ENCODE measurements at regions of chr11 and their contacts with region 1.

Region 1: DNA sequence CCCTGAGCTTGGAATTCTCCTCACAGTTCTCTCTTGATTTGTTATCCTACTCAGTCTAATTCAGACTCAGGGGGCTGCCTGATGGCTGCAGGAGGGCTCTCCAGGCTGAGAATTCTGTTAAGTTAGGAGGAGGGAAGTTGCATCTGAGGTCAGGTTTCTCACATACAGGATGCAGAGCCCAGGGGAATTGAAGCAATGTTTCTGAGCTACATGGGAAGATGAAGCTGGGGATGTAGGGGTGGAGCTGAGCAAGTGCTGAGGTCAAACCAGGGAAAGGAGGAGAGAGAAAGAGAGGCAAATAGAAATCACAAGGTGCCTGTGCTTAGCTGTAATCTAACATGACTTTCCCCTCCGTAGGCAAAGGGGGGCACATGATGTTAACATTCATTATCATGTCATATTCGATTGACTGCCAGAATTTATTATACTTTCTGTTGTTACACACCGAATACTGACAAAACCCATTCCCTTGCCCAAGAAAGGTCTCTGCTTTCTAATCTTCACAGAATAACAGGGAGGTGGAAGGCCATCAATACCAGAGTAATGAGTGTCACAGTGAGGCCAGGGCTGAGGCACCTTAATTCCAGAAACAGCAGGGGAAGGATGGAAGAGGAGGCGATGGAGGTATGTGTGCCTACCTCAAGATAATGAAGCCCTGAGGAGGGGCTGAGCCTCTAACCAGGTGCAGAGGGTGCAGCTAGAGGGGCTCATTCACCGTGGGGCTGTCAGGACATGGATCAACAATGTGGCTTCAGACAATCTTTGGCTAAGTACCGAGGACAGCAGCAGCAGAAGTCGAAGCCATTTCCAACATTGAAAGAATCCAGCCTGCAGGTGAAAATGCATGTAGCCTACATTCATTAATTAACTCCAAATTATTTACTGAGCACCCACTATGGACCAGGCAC is 205.4 kb upstream of the SNX19 start:
- DNase-seq: no peak
- H3K4me3 ChIP-seq: no peak overlapping the region
- H3K27ac ChIP-seq: no peak overlapping the region
- H3K4me1 ChIP-seq: no peaks in the 10 kb centered on the region
- H3K27me3 ChIP-seq: no peaks in the 10 kb centered on the region
- CTCF ChIP-seq: no peak

Region 2: GRCh38 chr11:131079036-131079435 is 42.6 kb before region 1 on chr11:
- intact Hi-C with region 1: no loop called
- DNase-seq: no peak
- H3K4me3 ChIP-seq: no peak overlapping the region
- H3K27ac ChIP-seq: no peak overlapping the region
- H3K4me1 ChIP-seq: no peaks in the 10 kb centered on the region
- H3K27me3 ChIP-seq: no peaks in the 10 kb centered on the region
- CTCF ChIP-seq: no peak

Region 3: DNA sequence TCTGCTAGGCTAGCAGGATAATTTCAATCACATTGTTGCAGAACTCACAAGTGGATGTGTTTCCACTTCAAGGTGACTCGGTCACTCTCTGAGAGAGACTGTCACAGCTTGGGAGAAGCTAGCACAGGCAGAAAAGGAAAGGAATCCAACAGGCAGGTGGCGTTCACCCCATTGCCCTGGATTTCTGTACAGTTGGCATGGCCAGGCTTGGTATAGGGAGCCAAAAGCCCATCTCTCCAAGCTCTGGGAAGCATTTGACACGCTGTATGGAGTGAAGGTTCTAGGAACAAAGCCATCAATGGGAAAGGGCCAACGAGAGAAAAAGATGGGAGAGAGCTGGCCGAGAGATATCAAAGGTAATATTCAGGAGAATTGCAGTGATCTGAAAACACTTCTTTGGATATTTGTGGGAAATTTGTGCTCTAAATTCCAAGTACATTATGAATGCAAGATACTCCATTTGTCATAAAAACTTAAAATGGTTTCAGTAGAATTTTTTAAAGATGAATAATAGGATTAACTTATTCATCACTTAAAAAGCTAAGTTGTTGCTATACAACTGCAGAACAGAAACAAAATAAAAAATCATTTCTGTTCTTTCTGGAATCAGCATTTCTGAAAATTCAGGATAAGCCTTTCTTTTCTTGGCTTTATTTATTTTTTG is 25.3 kb after region 1 on chr11:
- intact Hi-C with region 1: loop called (anchors 1 kb)
- DNase-seq: no peak
- H3K4me3 ChIP-seq: no peak overlapping the region
- H3K27ac ChIP-seq: no peak overlapping the region
- H3K4me1 ChIP-seq: no peaks in the 10 kb centered on the region
- H3K27me3 ChIP-seq: no peaks in the 10 kb centered on the region
- CTCF ChIP-seq: no peak

Measured in tibial artery (tissue), 4 donors.